ENCODE measurements at regions of chr17 and their contacts with region 1.

Region 1: DNA sequence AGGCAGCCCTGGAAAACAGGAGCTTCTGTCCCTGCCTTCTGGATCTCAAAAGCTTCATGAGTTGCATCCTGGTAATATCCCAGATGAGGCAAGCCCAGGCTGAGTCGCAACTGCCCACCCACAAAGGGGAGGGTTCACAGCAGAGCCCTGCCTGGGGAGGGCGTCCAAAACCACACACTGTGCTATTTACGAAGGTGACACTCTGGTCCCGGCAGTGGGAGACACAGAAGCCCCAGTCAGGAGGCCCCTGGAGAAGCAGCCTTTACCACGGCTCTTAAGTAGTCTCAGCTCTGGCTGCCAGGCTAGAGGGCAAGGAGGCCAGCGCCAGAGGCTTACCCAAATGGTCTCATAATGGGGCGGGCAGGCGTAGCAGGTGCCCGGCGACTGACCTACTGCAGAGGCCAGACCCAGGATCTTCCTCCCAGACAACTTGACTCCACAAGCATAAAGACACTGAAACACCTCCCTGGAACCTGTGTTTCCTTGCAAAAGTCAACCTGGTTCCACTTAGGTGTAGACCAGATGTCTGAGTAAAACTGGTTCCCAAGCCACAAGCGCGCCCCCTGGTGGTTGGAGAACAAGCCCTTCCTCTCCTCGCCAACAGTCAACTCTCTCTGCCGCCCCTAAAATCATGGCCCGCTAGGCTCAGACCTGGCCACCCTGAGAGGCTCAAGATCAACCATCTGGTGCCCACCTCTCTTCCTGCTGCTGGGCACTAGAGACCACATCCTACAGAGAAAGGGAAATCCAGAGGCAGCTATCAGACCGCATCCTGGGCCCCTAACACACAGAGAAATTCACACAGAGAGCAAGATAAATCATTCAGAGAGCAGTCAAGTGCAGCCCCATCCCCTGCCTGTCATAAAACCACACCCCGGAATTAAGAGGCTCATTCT is 5.2 kb downstream of the AXIN2 start:
- DNase-seq: no peak
- ATAC-seq: peak; percentile 72
- H3K4me3 ChIP-seq: peak overlapping the region; percentile 49; the same call in 1 of the 2 replicates
- H3K27ac ChIP-seq: no peak overlapping the region
- H3K4me1 ChIP-seq: peaks cover 4% of the 10 kb centered on the region; the same call in 1 of the 2 replicates
- H3K27me3 ChIP-seq: peaks cover 0 to 5% of the 10 kb centered on the region in 2 experiments; a peak in 2 of 4 replicates
- CTCF ChIP-seq: peak; percentile 67 to 91 (median 90)
- EP300 ChIP-seq: no peak
- POLR2A ChIP-seq: no peak
- RAD21 ChIP-seq: peak; percentile 58

Region 2: GRCh38 chr17:65231662-65232335 is 324.5 kb before region 1 on chr17:
- CTCF ChIA-PET with region 1: interaction called, 13 read pairs
- POLR2A ChIA-PET with region 1: no interaction called
- RAD21 ChIA-PET with region 1: no interaction called
- SMC1A ChIA-PET with region 1: interaction called, 3 read pairs
- in situ Hi-C with region 1: loop called (anchors 5 kb)
- intact Hi-C with region 1: loop called (anchors 2 kb)
- DNase-seq: peak; percentile 12
- ATAC-seq: peak; percentile 72
- H3K4me3 ChIP-seq: no peak overlapping the region
- H3K27ac ChIP-seq: no peak overlapping the region
- H3K4me1 ChIP-seq: peaks cover 20% of the 10 kb centered on the region
- H3K27me3 ChIP-seq: no peaks in the 10 kb centered on the region
- CTCF ChIP-seq: peak; percentile 72 to 87 (median 81)
- EP300 ChIP-seq: no peak
- POLR2A ChIP-seq: no peak
- RAD21 ChIP-seq: peak; percentile 94

Region 3: DNA sequence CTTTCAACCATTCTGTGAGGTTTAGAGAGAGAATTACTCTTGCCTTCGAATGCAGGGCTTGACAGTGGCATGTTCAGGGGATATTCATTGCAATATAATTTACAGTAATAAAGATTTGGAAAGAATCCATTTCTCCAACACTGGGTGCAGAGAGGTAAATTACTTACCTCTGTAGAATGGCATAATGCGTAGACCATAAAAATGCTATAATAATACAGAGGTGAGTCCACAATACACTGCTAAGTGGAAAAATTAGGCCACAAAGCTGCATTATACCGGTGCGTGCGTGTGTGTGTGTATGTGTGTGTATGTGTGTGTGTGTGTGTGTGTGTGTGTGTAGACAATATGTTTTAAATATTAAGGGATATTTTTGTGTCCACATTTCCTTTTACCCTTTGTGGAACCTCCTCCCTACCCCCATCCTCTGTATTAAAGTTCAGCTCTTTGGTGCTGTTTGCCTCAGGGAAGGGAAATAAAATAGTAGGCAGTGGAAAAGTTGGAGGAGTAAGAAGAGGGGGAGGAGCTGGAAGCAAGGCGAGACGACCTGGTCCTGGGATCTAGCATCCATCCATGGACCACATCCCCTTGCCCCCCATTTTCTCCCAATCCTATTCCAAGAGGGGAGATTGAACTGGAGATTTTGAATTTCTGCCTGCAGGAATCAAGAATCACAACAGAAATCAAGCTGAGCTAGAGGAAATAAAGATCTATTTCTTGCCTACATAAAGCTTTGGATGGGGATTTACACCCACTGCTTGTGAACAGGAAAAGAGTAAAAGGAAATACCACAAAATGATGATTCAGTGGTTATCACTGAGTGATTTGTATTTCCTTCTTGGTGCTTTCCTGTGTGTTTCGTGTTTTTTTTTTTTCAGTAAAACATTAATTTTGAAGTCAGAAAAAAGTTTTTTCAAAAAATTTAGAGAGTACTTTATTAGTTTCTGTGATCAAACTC is 294.3 kb before region 1 on chr17:
- CTCF ChIA-PET with region 1: no interaction called
- POLR2A ChIA-PET with region 1: no interaction called
- RAD21 ChIA-PET with region 1: no interaction called
- SMC1A ChIA-PET with region 1: no interaction called
- in situ Hi-C with region 1: no loop called
- intact Hi-C with region 1: no loop called
- DNase-seq: no peak
- ATAC-seq: no peak
- H3K4me3 ChIP-seq: no peak overlapping the region
- H3K27ac ChIP-seq: no peak overlapping the region
- H3K4me1 ChIP-seq: no peaks in the 10 kb centered on the region
- H3K27me3 ChIP-seq: peaks cover 1 to 3% of the 10 kb centered on the region in 2 experiments; a peak in 2 of 4 replicates
- CTCF ChIP-seq: no peak
- EP300 ChIP-seq: no peak
- POLR2A ChIP-seq: no peak
- RAD21 ChIP-seq: no peak

Region 4: GRCh38 chr17:65455972-65456343 is 100.3 kb before region 1 on chr17:
- CTCF ChIA-PET with region 1: no interaction called
- POLR2A ChIA-PET with region 1: no interaction called
- RAD21 ChIA-PET with region 1: interaction called, 4 read pairs
- SMC1A ChIA-PET with region 1: interaction called, 4 read pairs
- in situ Hi-C with region 1: no loop called
- intact Hi-C with region 1: loop called (anchors 5 kb)
- DNase-seq: no peak
- ATAC-seq: peak; percentile 48; the same call in 1 of the 3 replicates
- H3K4me3 ChIP-seq: no peak overlapping the region
- H3K27ac ChIP-seq: no peak overlapping the region
- H3K4me1 ChIP-seq: no peaks in the 10 kb centered on the region
- H3K27me3 ChIP-seq: no peaks in the 10 kb centered on the region
- CTCF ChIP-seq: peak in 2 of 3 experiments; percentile 26 to 37; a peak in 2 of 6 replicates
- EP300 ChIP-seq: no peak
- POLR2A ChIP-seq: no peak
- RAD21 ChIP-seq: peak; percentile 41; the same call in 1 of the 2 replicates

Region 5: GRCh38 chr17:65794572-65794971 is 238.3 kb after region 1 on chr17:
- CTCF ChIA-PET with region 1: interaction called, 10 read pairs
- POLR2A ChIA-PET with region 1: no interaction called
- RAD21 ChIA-PET with region 1: interaction called, 17 read pairs
- SMC1A ChIA-PET with region 1: interaction called, 36 read pairs
- in situ Hi-C with region 1: no loop called
- intact Hi-C with region 1: loop called (anchors 10 kb)
- DNase-seq: no peak
- ATAC-seq: peak; percentile 44; the same call in 1 of the 3 replicates
- H3K4me3 ChIP-seq: no peak overlapping the region
- H3K27ac ChIP-seq: no peak overlapping the region
- H3K4me1 ChIP-seq: no peaks in the 10 kb centered on the region
- H3K27me3 ChIP-seq: no peaks in the 10 kb centered on the region
- CTCF ChIP-seq: peak; percentile 38 to 56 (median 44); a peak in 4 of 6 replicates
- EP300 ChIP-seq: no peak
- POLR2A ChIP-seq: no peak
- RAD21 ChIP-seq: peak; percentile 33; the same call in 1 of the 2 replicates

Region 6: DNA sequence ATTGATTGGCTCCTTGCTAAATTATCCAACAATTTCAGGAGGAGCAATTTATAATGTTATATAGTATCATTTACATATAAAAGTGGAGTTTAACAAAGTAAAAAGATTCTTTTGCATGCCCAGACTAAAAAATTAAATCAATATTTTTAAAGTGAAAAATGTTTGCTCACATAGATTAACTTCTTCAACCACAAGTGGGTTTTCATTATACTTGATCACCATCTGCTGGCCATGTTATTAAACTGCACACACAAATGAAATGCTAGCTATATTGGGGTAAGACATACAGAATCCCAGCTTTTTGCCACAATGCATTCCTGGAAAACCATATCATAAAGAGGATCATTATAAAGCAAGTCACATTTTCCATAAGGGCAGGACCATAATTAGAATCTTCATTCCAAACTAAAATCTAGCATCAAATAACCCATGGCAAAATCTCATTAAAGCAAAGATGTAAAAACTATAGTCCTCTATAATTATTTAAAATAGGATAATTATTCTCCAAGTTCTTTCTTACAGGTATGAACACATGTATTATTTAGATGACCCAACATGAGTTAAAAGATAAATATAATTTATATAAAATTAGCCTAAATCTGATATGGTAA is 609.4 kb after region 1 on chr17:
- CTCF ChIA-PET with region 1: interaction called, 3 read pairs
- POLR2A ChIA-PET with region 1: no interaction called
- RAD21 ChIA-PET with region 1: no interaction called
- SMC1A ChIA-PET with region 1: interaction called, 6 read pairs
- in situ Hi-C with region 1: no loop called
- intact Hi-C with region 1: loop called (anchors 2 kb)
- DNase-seq: peak; percentile 5
- ATAC-seq: peak; percentile 53; the same call in 2 of the 3 replicates
- H3K4me3 ChIP-seq: no peak overlapping the region
- H3K27ac ChIP-seq: no peak overlapping the region
- H3K4me1 ChIP-seq: no peaks in the 10 kb centered on the region
- H3K27me3 ChIP-seq: no peaks in the 10 kb centered on the region; a peak in 1 of 4 replicates
- CTCF ChIP-seq: peak; percentile 54 to 73 (median 56); a peak in 5 of 6 replicates
- EP300 ChIP-seq: no peak
- POLR2A ChIP-seq: no peak
- RAD21 ChIP-seq: peak; percentile 91